A673 (cell line): ENCODE measurements at regions of chr16 and their contacts with region 1.

Region 1: DNA sequence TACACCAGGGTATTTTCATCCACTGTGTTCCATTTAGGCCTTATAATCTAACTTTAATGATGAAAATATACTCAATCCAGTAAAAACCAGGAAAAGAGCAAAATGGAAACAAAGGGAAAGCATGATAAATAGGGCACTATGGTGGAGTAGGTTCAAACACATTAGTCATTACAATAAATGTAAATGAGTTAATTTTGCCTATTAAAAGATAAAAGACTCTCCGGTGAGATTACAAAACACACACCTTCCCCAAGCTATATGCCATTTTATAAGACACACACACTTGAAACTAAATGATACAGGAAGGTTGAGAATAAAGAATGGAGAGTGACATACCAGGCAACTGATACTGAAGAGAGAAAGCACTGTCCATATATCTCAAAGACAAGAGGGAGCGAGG is 10.0 kb downstream of the PPL start:
- DNase-seq: no peak
- H3K4me3 ChIP-seq: no peak overlapping the region
- H3K27ac ChIP-seq: no peak overlapping the region
- H3K4me1 ChIP-seq: no peaks in the 10 kb centered on the region
- H3K27me3 ChIP-seq: no peaks in the 10 kb centered on the region
- CTCF ChIP-seq: no peak

Region 2: DNA sequence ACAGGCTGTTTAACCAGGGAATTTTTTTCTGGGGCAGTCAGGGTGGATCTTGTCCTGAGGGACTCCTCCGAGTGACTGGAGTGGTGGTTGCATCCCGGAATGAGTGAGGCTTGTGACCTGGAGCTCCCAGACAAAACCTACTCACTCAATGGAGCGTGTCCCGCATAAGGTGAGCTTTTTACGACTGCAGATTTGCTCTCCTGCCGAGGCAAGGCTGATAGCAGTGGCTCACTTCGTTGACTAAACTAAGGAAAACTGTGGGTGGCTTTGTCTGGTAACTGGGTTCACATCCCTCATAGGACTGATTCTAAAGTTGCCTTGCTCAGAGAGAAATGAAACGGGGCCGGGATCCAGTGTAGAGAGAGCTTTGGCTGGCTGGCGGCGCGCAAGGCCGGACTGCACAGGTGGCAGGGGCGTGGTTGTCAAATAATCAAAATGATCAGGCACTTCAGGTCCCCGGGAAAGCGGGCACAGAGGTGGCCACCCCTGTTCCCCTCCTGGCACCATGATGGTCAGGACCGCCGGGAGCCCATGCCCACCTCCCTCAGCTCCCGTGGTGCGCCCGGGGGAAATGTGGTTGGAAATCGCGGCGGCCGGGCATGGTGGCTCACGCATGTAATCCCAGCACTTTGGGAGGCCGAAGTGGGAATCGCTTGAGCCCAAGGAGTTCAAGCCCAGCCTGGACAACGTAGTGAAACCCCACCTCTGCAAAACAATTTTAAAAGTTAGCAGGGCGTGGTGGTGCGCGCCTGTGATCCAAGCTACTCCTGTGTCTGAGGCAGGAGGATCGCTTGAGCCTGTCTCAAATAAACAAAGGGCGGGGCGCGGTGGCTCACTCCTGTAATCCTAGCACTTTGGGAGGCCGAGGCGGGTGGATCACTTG is 1765.6 kb before region 1 on chr16:
- CTCF ChIA-PET with region 1: no interaction called
- POLR2A ChIA-PET with region 1: interaction called, 26 read pairs
- intact Hi-C with region 1: no loop called
- DNase-seq: no peak
- H3K4me3 ChIP-seq: no peak overlapping the region
- H3K27ac ChIP-seq: no peak overlapping the region
- H3K4me1 ChIP-seq: no peaks in the 10 kb centered on the region
- H3K27me3 ChIP-seq: no peaks in the 10 kb centered on the region
- CTCF ChIP-seq: no peak

Region 3: DNA sequence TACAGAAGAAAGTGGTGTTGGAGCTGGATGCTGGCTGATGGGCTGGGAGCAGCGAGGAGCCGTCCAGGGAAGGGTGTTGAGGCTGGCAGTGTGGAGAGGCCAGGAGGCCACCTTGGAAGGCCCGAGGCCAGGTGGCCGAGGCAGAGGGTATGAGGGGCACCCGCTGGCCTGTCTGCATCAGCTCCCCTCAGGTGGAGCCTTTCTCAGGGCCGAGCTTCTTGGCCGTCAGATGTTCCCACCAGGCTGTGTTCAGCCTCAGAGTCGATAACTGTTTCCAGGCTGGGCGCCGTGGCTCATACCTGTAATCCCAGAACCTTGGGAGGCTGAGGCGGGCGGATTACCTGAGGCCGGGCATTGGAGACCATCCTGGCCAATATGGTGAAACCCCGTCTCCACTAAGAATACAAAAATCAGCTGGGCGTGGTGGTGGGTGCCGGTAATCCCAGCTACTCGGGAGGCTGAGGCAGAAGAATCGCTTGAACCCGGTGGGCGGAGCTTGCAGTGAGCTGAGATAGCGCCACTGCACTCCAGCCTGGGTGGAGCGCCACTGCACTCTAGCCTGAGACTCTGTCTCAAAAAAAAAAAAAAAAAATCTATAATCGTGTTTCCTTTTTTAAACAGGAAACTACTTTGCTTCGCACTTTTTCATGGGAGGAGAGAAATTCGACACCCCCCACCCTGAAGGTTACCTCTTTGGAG is 277.0 kb before region 1 on chr16:
- CTCF ChIA-PET with region 1: no interaction called
- POLR2A ChIA-PET with region 1: no interaction called
- intact Hi-C with region 1: no loop called
- DNase-seq: no peak
- H3K4me3 ChIP-seq: no peak overlapping the region
- H3K27ac ChIP-seq: no peak overlapping the region
- H3K4me1 ChIP-seq: no peaks in the 10 kb centered on the region
- H3K27me3 ChIP-seq: no peaks in the 10 kb centered on the region
- CTCF ChIP-seq: no peak

Region 4: DNA sequence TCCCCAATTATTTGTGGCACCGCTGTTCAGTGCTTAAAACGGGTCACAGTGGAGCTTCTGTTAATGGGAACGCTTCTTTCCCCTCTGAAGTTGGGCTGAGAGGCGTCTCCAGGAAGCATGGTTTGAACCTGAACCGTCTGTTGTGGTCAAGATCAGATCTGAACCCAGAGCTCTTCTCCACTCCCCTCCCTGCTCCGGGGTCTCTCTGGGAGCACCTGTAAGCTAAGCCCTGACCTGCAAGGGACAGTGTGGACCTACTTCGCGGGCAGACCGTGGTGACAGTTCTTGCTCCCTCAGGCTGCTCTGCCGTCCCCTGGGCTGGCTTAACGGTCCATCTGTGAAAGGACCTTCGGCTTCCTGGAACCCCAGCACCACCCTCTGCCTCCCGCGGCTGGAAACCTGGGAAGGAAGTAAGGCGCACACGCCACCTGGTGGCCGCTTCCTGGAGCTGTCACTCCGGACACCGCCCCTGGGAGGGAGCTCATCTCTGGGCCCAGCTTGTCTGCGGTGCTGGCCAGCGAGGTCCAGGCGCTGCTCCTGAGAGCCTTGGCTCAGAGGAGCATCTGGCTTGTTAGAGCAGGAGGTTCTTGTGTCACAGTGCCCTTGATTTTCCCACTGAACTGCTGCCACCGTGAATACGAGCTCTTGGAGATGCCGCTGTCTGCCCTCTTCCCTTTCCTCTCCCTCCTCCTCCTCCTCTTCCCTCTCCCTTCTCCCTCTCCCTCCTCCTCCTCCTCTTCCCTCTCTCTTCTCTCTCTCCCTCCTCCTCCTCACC is 689.1 kb after region 1 on chr16:
- CTCF ChIA-PET with region 1: no interaction called
- POLR2A ChIA-PET with region 1: no interaction called
- intact Hi-C with region 1: no loop called
- DNase-seq: peak; percentile 77
- H3K4me3 ChIP-seq: no peak overlapping the region
- H3K27ac ChIP-seq: no peak overlapping the region
- H3K4me1 ChIP-seq: no peaks in the 10 kb centered on the region
- H3K27me3 ChIP-seq: no peaks in the 10 kb centered on the region
- CTCF ChIP-seq: peak; percentile 87